ENCODE measurements at regions of chr12 and their contacts with region 1.

Region 1: GRCh38 chr12:91811481-91812287 is 334.0 kb downstream of the BTG1 start:
- DNase-seq: peak; percentile 56 to 71
- ATAC-seq: peak in 2 of 4 donors; percentile 47 to 69
- H3K4me3 ChIP-seq: no peak overlapping the region
- H3K27ac ChIP-seq: no peak overlapping the region
- H3K4me1 ChIP-seq: no peaks in the 10 kb centered on the region
- H3K27me3 ChIP-seq: no peaks in the 10 kb centered on the region
- CTCF ChIP-seq: peak; percentile 79

Region 2: DNA sequence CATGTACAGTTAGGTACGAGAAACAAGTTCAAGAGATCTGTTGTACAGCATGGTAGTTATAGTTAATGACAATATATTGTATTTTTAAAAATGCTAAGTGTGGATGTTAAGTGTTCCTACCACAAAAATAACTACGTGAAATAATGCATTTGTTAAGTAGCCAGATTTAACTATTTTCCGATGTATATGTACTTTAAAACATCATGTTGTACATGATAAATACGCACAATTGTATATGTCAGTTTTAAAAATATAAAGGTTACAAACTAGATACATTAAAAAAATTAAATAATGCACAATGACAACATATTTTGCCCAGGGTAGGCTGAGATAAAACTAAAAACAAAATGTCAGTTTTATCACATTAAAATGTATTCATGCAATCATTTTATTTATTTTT is 344.0 kb before region 1 on chr12:
- intact Hi-C with region 1: no loop called
- DNase-seq: no peak
- ATAC-seq: no peak
- H3K4me3 ChIP-seq: no peak overlapping the region
- H3K27ac ChIP-seq: no peak overlapping the region
- H3K4me1 ChIP-seq: no peaks in the 10 kb centered on the region
- H3K27me3 ChIP-seq: no peaks in the 10 kb centered on the region
- CTCF ChIP-seq: no peak

Region 3: DNA sequence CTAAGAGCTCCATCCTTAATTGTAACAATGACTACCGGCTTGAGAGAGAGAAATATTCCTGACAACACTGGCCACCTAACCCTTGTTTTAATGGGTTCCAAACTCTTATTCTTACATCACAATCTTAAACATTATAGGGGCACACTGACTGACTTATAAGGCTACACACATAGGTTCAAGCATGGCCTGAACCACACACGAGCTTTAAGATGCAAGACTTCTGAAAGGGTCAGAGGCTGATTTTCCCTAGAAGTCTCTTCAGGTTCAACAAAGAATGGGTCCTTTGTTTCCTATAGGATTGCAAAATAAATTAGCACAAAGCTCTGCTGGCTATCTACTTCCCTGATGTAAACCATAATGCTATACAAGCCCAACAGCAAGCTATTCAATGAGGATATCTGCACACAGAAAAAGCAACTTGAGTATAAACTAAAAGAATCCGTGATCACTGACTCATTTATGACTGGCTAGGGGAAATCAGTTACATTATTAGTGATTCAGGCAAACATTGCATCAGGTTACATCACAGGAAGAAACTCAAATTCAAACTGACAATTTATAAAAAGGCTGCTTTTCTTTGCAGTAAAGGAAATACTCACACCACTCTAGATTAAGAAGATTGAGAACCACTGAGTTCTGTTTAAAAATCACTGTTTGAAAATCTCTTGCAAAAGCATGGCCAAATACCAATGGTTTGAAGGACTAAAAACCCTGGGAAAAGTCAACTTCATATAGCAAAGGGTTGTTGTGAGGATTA is 325.5 kb after region 1 on chr12:
- intact Hi-C with region 1: loop called (anchors 5 to 10 kb)
- DNase-seq: no peak
- ATAC-seq: no peak
- H3K4me3 ChIP-seq: peak overlapping the region; percentile 86
- H3K27ac ChIP-seq: no peak overlapping the region
- H3K4me1 ChIP-seq: peaks cover 78% of the 10 kb centered on the region
- H3K27me3 ChIP-seq: no peaks in the 10 kb centered on the region
- CTCF ChIP-seq: no peak